SK-N-SH (cell line): ENCODE measurements at regions of chr12 and their contacts with region 1.

Region 1: DNA sequence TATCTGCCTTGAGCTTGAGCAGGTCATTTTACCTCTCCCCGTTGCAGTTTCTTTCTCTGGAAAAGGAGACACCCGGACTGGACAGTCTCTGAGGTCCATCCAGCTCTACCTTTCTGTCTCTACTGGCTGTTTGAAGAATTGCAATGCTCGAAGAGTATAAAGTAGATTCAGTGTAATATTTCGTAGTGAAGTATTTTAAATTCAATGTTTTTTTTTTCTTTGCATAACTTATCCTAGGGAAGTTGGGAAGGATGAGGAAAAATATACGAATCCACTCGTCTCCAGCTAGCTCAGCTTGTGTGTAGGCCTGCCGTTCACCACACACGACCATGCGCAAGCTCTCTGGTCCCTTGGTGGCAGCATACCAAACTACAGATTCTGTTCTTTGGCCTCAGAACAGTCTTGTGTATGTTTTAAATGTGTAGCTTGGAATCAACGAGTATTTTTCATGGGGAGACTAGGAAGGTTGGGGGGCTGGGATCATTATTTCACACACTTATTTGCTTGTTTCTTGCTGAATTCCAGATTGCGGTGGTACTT is 307.9 kb downstream of the CACNA1C start:
- DNase-seq: no peak
- H3K4me3 ChIP-seq: no peak overlapping the region
- H3K27ac ChIP-seq: no peak overlapping the region
- H3K4me1 ChIP-seq: peaks cover 13 to 15% of the 10 kb centered on the region in 2 experiments; a peak in 2 of 4 replicates
- H3K27me3 ChIP-seq: no peaks in the 10 kb centered on the region
- CTCF ChIP-seq: peak; percentile 41
- EP300 ChIP-seq: no peak
- RAD21 ChIP-seq: no peak

Region 2: DNA sequence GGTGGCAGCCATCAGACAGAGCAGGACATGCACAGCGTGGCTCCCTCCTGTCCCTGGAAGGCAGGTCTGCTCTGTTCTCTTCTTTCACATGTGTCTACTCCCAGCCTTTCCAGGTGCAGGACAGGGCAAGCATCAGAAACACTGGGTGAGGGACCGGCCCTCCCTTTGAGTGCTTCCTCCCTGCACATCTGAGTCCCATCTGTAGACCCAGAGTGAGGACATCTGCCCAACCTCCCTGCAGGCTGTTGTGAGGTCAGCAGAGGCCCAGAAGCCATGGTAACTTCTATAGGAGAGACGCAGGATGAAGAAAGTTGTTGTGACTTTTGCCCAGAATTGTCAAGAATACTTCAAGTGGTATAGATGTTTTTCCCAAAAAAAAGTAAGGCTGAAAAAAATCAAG is 25.2 kb before region 1 on chr12:
- CTCF ChIA-PET with region 1: interaction called, 11 read pairs
- POLR2A ChIA-PET with region 1: no interaction called
- DNase-seq: no peak
- H3K4me3 ChIP-seq: no peak overlapping the region
- H3K27ac ChIP-seq: peak overlapping the region; percentile 83 to 98
- H3K4me1 ChIP-seq: peaks cover 19 to 38% of the 10 kb centered on the region in 2 experiments
- H3K27me3 ChIP-seq: no peaks in the 10 kb centered on the region
- CTCF ChIP-seq: no peak
- EP300 ChIP-seq: no peak
- RAD21 ChIP-seq: no peak